Right ventricle myocardium superior (tissue), 1 donor: ENCODE measurements at regions of chr1 and their contacts with region 1.

Region 1: DNA sequence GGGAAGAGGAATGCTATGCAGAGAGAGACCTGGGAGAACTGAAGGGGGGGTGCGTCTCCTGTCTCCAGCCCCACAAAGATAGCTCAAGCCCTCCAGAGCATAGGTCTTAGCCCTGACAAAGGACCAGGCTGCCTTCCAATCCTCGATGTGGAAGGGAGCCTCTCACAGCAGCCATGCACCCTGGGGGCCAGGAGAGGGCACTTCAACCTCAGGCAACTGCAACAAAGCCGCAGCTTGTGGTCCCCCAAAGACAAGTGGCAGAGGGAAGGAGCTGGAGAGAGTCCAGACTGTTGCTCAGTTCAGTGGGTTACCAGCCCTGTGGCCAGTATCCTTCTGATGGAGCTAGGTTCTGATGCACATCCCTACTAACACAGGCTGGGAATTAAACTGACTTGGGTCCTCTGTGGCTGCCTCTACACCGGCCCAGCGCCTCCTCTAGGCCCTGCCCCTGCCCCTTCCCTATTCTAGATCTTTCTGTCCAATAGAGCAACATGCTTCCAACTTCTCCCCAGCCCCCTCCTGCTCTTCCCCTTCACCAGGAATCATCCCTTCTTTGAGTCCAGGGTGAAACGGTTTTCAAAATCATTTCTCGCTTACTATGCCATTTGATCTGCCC is 100.8 kb upstream of the SPATA6 start:
- DNase-seq: peak; percentile 47
- ATAC-seq: peak; percentile 70

Region 2: GRCh38 chr1:48817505-48818114 is 244.9 kb after region 1 on chr1:
- intact Hi-C with region 1: loop called (anchors 10 kb)
- DNase-seq: peak; percentile 59
- ATAC-seq: peak; percentile 80